A673 (cell line): ENCODE measurements at regions of chr17 and their contacts with region 1.

Region 1: DNA sequence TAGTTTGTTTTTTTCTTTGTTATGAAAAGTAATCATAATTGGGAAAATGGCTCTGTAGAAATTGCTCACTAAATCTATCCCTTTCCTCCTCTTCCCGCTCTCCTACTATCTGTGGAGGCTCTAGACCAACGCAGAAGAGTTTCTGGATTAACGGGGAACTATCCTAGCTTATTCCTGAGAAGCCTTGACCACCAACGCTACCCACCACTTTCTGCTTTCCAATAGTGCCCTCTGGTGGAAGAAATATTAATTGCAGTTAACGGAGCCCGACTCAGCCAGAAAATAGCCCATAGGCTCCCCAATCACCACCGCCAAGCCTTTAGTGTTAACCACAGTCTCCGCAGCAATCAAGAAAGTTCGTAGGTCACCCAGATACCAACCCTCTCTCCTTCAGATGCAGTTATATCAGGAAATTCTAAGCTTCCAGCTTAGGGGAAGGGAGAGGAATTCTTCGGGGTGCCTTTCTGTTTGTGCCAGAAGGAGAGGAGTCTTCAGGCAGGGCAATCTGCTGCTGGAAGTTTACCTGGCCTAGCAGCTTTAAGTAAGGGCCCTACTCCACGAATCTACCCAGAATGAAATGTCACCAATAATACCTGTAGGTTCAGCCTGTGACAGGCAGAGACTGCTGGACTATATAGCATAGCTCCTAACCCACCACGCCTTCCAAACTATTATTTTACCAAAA is 23.0 kb upstream of the NSRP1 start:
- DNase-seq: peak; percentile 87
- H3K4me3 ChIP-seq: no peak overlapping the region
- H3K27ac ChIP-seq: peak overlapping the region; percentile 89
- H3K4me1 ChIP-seq: peaks cover 58% of the 10 kb centered on the region
- H3K27me3 ChIP-seq: no peaks in the 10 kb centered on the region
- CTCF ChIP-seq: peak; percentile 85

Region 2: GRCh38 chr17:29369831-29370735 is 723.5 kb before region 1 on chr17:
- CTCF ChIA-PET with region 1: interaction called, 4 read pairs
- POLR2A ChIA-PET with region 1: no interaction called
- intact Hi-C with region 1: loop called (anchors 5 kb)
- DNase-seq: peak; percentile 91
- H3K4me3 ChIP-seq: peak overlapping the region; percentile 25
- H3K27ac ChIP-seq: no peak overlapping the region
- H3K4me1 ChIP-seq: peaks cover 12% of the 10 kb centered on the region
- H3K27me3 ChIP-seq: no peaks in the 10 kb centered on the region
- CTCF ChIP-seq: peak; percentile 76

Region 3: GRCh38 chr17:29617125-29617480 is 476.5 kb before region 1 on chr17:
- CTCF ChIA-PET with region 1: interaction called, 10 read pairs
- POLR2A ChIA-PET with region 1: no interaction called
- intact Hi-C with region 1: loop called (anchors 5 kb)
- DNase-seq: peak; percentile 93
- H3K4me3 ChIP-seq: no peak overlapping the region
- H3K27ac ChIP-seq: no peak overlapping the region
- H3K4me1 ChIP-seq: peaks cover 47% of the 10 kb centered on the region
- H3K27me3 ChIP-seq: no peaks in the 10 kb centered on the region
- CTCF ChIP-seq: peak; percentile 96

Region 4: GRCh38 chr17:29807520-29808351 is 285.9 kb before region 1 on chr17:
- CTCF ChIA-PET with region 1: interaction called, 15 read pairs
- POLR2A ChIA-PET with region 1: no interaction called
- intact Hi-C with region 1: loop called (anchors 2 kb)
- DNase-seq: peak; percentile 81
- H3K4me3 ChIP-seq: no peak overlapping the region
- H3K27ac ChIP-seq: no peak overlapping the region
- H3K4me1 ChIP-seq: no peaks in the 10 kb centered on the region
- H3K27me3 ChIP-seq: no peaks in the 10 kb centered on the region
- CTCF ChIP-seq: peak; percentile 84

Region 5: DNA sequence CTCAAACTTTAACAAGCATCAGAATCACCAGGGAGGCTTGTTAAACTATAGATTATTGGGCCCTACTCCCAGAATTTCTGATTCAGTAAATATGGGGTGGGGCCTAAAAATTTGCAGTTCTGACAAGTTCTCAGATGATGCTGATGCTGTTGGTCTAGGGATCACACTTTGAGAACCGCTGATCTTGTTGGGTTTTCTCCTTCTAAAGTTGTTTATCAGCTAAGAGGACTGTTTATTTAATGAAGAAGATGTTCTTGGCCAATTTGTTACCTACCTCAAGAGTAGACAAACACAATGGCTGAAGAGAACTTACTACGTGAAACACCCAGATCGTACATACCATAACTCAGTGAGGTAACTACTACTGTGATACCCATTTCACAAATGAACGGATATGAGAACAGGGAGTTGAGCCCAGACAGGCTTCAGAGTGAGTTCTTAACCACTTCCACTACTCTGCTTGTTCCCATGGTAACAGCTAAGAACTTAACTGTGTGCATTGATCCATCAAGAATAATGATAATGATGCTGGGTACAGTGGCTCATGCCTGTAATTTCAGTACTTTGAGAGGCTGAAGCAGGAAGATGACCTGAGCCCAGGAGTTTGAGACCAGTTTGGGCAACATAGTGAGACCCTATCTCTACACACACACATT is 62.3 kb before region 1 on chr17:
- CTCF ChIA-PET with region 1: interaction called, 14 read pairs
- POLR2A ChIA-PET with region 1: no interaction called
- intact Hi-C with region 1: loop called (anchors 1 kb)
- DNase-seq: no peak
- H3K4me3 ChIP-seq: no peak overlapping the region
- H3K27ac ChIP-seq: no peak overlapping the region
- H3K4me1 ChIP-seq: peaks cover 31% of the 10 kb centered on the region
- H3K27me3 ChIP-seq: peaks cover 3% of the 10 kb centered on the region
- CTCF ChIP-seq: no peak

Region 6: GRCh38 chr17:30104575-30105339 is 11.2 kb after region 1 on chr17:
- CTCF ChIA-PET with region 1: interaction called, 10 read pairs
- POLR2A ChIA-PET with region 1: no interaction called
- intact Hi-C with region 1: no loop called
- DNase-seq: peak; percentile 88
- H3K4me3 ChIP-seq: peak overlapping the region; percentile 44
- H3K27ac ChIP-seq: no peak overlapping the region
- H3K4me1 ChIP-seq: no peaks in the 10 kb centered on the region
- H3K27me3 ChIP-seq: no peaks in the 10 kb centered on the region
- CTCF ChIP-seq: peak; percentile 98

Region 7: DNA sequence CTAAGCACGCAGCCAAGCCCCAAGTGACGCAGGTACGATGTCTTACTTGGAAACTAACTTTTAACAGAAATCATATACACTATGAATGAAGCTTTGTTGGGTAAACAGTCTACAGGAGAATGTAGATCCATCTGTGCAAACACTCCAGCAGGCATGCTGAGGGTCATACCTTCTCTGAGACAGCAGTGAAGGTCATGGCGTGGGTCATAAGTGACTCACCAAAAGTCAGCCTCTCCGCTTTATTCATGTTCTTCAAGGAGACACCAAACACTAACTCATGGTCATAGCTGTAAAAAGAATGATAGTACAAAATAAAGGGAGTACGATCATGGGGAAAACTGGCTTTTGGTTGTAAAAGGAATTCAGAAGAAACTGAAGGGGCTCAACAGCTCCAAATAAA is 177.5 kb after region 1 on chr17:
- CTCF ChIA-PET with region 1: no interaction called
- POLR2A ChIA-PET with region 1: no interaction called
- intact Hi-C with region 1: no loop called
- DNase-seq: no peak
- H3K4me3 ChIP-seq: no peak overlapping the region
- H3K27ac ChIP-seq: no peak overlapping the region
- H3K4me1 ChIP-seq: peaks cover 7% of the 10 kb centered on the region
- H3K27me3 ChIP-seq: no peaks in the 10 kb centered on the region
- CTCF ChIP-seq: no peak